WTC11 (cell line): ENCODE measurements at regions of chr17 and their contacts with region 1.

Region 1: DNA sequence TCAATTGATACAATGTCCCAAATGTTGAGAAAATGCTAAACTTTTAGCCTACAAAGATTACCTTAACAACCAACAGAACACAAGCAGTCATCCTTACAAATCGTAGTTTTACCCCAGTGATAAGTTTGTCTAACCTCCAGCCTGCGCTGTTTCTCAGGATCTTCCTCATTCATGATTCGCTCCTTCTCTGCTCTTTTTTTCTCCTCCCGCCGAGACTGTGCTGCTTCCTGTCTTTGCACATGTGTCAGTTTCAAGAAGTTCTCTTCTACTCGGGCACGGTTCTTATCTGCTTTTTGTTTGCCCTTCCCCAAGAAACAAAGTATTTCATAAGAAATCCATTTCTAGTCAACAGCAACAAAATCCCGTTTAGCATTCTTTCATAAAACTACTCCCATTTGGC is 10.2 kb upstream of the STRADA start:
- DNase-seq: no peak
- ATAC-seq: no peak
- H3K4me3 Mint-ChIP-seq: no peak overlapping the region
- H3K27ac Mint-ChIP-seq: peak overlapping the region; percentile 57
- H3K4me1 Mint-ChIP-seq: no peaks in the 10 kb centered on the region
- H3K27me3 Mint-ChIP-seq: no peaks in the 10 kb centered on the region
- CTCF ChIP-seq: no peak

Region 2: DNA sequence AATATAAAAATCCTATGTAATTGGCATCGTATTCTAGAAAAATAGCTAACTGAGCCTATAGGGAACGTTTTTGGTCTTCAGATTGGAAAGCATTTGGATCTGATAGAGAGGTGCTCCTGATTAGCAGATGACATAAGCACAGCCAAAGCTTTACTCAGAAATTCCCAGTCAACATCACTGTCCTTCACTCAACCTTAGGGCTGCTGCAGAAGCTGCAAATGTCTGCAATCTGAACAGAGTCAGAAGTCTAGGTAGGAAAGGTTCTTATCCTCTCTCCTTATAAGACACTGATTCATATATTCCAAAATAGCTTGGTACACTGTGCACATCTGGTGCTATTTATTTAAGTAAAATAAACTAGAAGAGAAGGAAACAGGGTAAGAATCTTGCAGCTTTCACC is 29.4 kb before region 1 on chr17:
- CTCF ChIA-PET with region 1: no interaction called
- POLR2A ChIA-PET with region 1: no interaction called
- DNase-seq: no peak
- ATAC-seq: no peak
- H3K4me3 Mint-ChIP-seq: no peak overlapping the region
- H3K27ac Mint-ChIP-seq: no peak overlapping the region
- H3K4me1 Mint-ChIP-seq: no peaks in the 10 kb centered on the region
- H3K27me3 Mint-ChIP-seq: no peaks in the 10 kb centered on the region
- CTCF ChIP-seq: no peak

Region 3: GRCh38 chr17:63800800-63801199 is 49.0 kb after region 1 on chr17:
- CTCF ChIA-PET with region 1: interaction called, 3 read pairs
- POLR2A ChIA-PET with region 1: interaction called, 12 read pairs
- DNase-seq: no peak
- ATAC-seq: no peak
- H3K4me3 Mint-ChIP-seq: no peak overlapping the region
- H3K27ac Mint-ChIP-seq: no peak overlapping the region
- H3K4me1 Mint-ChIP-seq: no peaks in the 10 kb centered on the region
- H3K27me3 Mint-ChIP-seq: no peaks in the 10 kb centered on the region
- CTCF ChIP-seq: no peak